A673 (cell line): ENCODE measurements at regions of chr13 and their contacts with region 1.

Region 1: DNA sequence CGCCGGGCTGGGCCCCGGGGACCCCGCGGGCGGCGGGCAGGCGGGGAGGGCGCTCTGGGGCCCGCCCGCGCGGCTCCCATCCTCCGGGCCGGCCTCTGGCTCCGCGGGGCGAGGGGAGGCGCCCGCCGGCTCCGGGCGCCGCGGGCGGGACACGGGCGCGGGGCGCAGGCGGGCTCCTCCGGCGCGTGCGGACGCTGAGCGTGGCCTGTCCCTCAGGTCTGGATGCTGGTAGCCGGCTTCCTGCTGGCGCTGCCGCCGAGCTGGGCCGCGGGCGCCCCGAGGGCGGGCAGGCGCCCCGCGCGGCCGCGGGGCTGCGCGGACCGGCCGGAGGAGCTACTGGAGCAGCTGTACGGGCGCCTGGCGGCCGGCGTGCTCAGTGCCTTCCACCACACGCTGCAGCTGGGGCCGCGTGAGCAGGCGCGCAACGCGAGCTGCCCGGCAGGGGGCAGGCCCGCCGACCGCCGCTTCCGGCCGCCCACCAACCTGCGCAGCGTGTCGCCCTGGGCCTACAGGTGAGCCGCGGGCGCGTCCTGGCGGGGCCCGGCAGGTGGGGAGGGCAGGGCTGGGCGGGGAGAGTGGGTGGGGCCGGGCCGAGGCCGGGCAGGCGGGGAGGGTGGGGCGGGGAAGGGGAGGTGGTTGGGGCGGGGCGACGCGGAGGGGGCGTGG is 414 bp downstream of the IL17D start:
- DNase-seq: peak; percentile 83
- H3K4me3 ChIP-seq: peak overlapping the region; percentile 75
- H3K27ac ChIP-seq: no peak overlapping the region
- H3K4me1 ChIP-seq: peaks cover 8% of the 10 kb centered on the region
- H3K27me3 ChIP-seq: no peaks in the 10 kb centered on the region
- CTCF ChIP-seq: peak; percentile 37; the same call in 1 of the 2 replicates

Region 2: DNA sequence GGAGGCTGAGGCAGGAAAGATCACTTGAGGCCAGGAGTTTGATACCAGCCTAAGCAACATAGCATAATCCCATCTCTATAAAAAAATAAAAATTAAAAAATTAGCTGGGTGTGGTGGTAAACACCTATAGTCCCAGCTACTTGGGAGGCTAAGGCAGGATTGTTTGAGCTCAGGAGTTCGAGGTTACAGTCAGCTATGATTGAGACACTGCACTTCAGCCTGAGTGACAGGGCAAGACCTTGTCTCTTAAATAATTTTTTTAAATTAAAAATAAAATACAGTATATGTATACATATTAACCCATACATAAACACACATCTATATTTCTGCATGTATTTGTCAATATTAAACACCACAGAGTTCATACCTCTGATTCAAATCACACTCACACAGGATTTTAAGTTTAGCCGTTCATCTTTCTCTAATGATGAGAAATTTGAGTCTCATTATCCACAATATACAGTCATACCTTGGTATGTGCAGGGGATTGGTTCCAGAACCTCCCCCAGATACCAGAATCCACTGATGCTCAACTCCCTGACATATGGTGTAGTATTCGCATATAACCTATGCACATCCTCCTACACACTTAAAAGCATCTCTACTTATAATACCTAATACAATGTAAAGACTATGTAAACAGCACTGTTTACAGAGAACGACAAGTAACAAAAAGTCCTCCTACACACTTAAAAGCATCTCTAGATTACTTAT is 965.9 kb before region 1 on chr13:
- CTCF ChIA-PET with region 1: no interaction called
- POLR2A ChIA-PET with region 1: no interaction called
- intact Hi-C with region 1: no loop called
- DNase-seq: no peak
- H3K4me3 ChIP-seq: no peak overlapping the region
- H3K27ac ChIP-seq: no peak overlapping the region
- H3K4me1 ChIP-seq: no peaks in the 10 kb centered on the region
- H3K27me3 ChIP-seq: no peaks in the 10 kb centered on the region
- CTCF ChIP-seq: no peak

Region 3: GRCh38 chr13:20525690-20526544 is 178.0 kb before region 1 on chr13 and contains the start of gene CRYL1:
- CTCF ChIA-PET with region 1: no interaction called
- POLR2A ChIA-PET with region 1: no interaction called
- intact Hi-C with region 1: loop called (anchors 5 kb)
- DNase-seq: peak; percentile 74
- H3K4me3 ChIP-seq: peak within 1 kb of the TSS; percentile 92
- H3K27ac ChIP-seq: peak within 1 kb of the TSS; percentile 65
- H3K4me1 ChIP-seq: peaks cover 15% of the 10 kb centered on the region
- H3K27me3 ChIP-seq: no peaks in the 10 kb centered on the region
- CTCF ChIP-seq: no peak
- total RNA-seq, gene CRYL1: 5.9 and 9.9 TPM in 2 replicates